CD4-positive, alpha-beta T cell (primary cell): ENCODE measurements at regions of chr6 and their contacts with region 1.

Region 1: DNA sequence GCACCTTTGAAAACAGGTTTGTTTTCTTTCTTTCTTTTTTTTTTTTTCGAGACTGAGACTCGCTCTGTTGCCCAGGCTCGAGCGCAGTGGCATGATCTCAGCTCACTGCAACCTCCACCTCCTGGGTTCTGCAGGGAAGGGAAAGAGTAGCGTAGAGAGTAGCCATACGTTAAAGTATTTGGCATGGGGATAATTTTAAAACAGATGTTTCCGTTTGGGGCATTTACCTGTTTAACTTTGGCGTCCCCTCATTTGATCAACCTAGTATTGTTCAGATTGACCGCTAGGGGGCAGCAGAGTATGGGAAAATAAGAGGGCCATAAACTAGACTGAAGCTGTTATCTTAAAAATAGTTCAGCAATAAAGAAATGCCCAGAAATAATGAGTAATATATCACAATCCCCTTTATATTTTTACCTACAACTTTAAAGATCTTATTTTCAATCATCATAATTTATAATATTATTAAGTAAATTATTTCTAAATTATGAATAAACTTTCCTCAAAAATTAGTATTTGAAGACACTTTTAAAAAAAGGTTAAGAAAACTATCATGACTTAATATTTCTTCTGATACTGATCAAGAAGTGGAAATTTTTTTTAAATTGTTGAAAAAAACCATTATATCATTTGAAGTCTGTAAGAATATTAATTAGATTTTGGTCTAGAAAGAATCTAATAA is 7.6 kb upstream of the TAAR9 start:
- DNase-seq: peak; percentile 13 to 83 (median 58)
- ATAC-seq: peak; percentile 73
- H3K4me3 ChIP-seq: no peak overlapping the region
- H3K4me3 Mint-ChIP-seq: no peak overlapping the region
- H3K27ac ChIP-seq: no peak overlapping the region
- H3K27ac Mint-ChIP-seq: no peak overlapping the region
- H3K4me1 ChIP-seq: no peaks in the 10 kb centered on the region
- H3K4me1 Mint-ChIP-seq: no peaks in the 10 kb centered on the region
- H3K27me3 ChIP-seq: peaks cover 0 to 2% of the 10 kb centered on the region in 2 experiments
- H3K27me3 Mint-ChIP-seq: peaks cover 21% of the 10 kb centered on the region
- CTCF ChIP-seq: peak; percentile 92

Region 2: GRCh38 chr6:132768051-132768517 is 237.7 kb after region 1 on chr6:
- CTCF ChIA-PET with region 1: interaction called, 5 read pairs
- POLR2A ChIA-PET with region 1: no interaction called
- intact Hi-C with region 1: loop called (anchors 5 to 10 kb)
- DNase-seq: peak in 3 of 14 experiments; percentile 16 to 47 (median 45)
- ATAC-seq: peak; percentile 38
- H3K4me3 ChIP-seq: no peak overlapping the region
- H3K4me3 Mint-ChIP-seq: no peak overlapping the region
- H3K27ac ChIP-seq: no peak overlapping the region
- H3K27ac Mint-ChIP-seq: no peak overlapping the region
- H3K4me1 ChIP-seq: peaks cover 8% of the 10 kb centered on the region
- H3K4me1 Mint-ChIP-seq: peaks cover 15% of the 10 kb centered on the region
- H3K27me3 ChIP-seq: no peaks in the 10 kb centered on the region
- H3K27me3 Mint-ChIP-seq: no peaks in the 10 kb centered on the region
- CTCF ChIP-seq: peak; percentile 27

Region 3: DNA sequence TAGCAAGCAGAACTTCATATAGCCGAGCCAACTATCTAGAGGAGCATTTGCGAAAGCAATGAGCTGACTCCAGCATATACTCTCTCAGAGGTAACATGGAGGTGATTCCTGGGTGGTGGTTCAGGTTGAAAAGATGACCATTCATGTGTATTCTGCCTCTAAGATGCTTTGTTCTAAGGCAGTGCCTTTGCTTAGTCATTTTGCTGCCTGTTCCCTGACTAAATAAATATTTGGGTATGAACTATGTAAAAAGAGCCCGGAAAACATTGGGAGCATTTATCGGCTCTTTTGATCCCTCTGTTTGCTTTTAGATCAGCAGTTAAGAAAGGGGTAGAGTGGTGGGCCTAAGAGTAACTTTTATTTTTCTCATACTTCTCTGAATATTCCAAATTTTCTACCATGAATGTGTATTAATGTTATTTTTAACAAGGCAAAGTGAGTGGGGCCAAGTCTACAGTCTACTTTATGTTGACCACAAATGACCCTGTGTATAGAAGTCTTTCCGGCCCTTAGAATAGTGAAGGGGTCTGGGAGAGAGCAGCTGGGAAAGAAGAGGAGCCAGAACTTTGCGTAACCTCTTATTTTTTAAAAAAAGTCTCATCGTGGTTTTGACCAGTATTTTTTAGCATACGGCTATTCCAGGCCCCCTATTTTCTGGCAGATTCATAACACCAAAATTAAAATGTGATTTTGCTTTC is 504.2 kb after region 1 on chr6:
- CTCF ChIA-PET with region 1: no interaction called
- POLR2A ChIA-PET with region 1: no interaction called
- intact Hi-C with region 1: loop called in 1 of 2 experiments (anchors 5 kb)
- DNase-seq: no peak
- ATAC-seq: no peak
- H3K4me3 ChIP-seq: no peak overlapping the region
- H3K4me3 Mint-ChIP-seq: no peak overlapping the region
- H3K27ac ChIP-seq: no peak overlapping the region
- H3K27ac Mint-ChIP-seq: no peak overlapping the region
- H3K4me1 ChIP-seq: no peaks in the 10 kb centered on the region
- H3K4me1 Mint-ChIP-seq: no peaks in the 10 kb centered on the region
- H3K27me3 ChIP-seq: no peaks in the 10 kb centered on the region
- H3K27me3 Mint-ChIP-seq: peaks cover 10% of the 10 kb centered on the region
- CTCF ChIP-seq: no peak

Region 4: DNA sequence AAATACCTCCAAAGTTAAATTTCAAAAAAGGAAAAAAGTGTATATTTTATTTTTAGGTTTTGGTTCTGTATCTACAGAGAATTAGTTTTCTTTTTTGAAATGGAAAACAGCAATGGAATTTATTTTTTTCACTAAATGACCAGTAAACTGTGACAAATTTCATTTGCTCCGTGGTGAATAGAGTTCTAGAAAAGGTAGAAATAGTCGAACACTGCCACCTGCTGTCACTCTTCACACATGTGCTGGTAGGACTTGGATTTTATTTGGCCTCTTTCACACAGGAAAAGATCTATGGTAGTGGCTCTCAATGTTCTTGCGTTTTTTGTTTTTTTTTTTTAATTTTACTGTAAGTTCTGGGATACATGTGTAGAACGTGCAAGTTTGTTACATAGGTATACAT is 1023.2 kb after region 1 on chr6:
- CTCF ChIA-PET with region 1: no interaction called
- POLR2A ChIA-PET with region 1: interaction called, 3 read pairs
- intact Hi-C with region 1: loop called (anchors 1 to 5 kb)
- DNase-seq: peak in 5 of 14 experiments; percentile 3 to 50 (median 39)
- ATAC-seq: no peak
- H3K4me3 ChIP-seq: no peak overlapping the region
- H3K4me3 Mint-ChIP-seq: no peak overlapping the region
- H3K27ac ChIP-seq: no peak overlapping the region
- H3K27ac Mint-ChIP-seq: no peak overlapping the region
- H3K4me1 ChIP-seq: no peaks in the 10 kb centered on the region
- H3K4me1 Mint-ChIP-seq: no peaks in the 10 kb centered on the region
- H3K27me3 ChIP-seq: peaks cover 0 to 3% of the 10 kb centered on the region in 2 experiments
- H3K27me3 Mint-ChIP-seq: peaks cover 8% of the 10 kb centered on the region
- CTCF ChIP-seq: peak; percentile 44

Region 5: DNA sequence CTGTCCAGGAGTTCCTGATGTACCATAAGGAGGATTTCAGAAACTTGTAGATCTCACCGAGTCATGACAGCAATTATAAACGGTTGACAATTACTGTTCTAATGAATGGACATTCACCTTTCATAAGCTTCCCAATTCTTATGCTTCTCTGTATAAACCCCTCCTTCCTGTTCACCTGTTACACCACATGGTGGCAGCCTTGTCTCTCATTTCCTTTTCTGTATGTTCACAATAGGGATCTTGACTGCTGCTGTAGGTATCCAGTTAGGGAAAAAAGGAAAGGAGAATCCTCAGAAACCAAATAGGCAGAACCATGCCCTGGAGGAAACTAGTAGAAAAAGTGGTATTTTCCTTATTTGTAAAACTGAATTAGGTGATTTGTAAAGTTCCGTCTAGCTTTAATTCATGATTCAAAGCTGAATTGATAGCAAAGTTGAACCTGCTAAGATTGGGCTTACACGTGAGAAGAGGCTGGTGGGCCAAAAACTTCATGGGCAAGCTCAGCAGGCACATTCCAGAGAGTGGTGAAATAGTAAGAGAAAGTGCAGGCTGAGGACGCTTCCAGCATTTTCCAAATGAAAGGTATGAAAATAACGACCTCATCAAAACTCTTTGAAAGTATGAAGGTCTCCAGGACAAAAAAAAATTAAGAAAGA is 1393.6 kb after region 1 on chr6:
- CTCF ChIA-PET with region 1: no interaction called
- POLR2A ChIA-PET with region 1: no interaction called
- intact Hi-C with region 1: loop called (anchors 5 kb)
- DNase-seq: peak in 13 of 14 experiments; percentile 24 to 81 (median 38)
- ATAC-seq: peak; percentile 86
- H3K4me3 ChIP-seq: no peak overlapping the region
- H3K4me3 Mint-ChIP-seq: no peak overlapping the region
- H3K27ac ChIP-seq: no peak overlapping the region
- H3K27ac Mint-ChIP-seq: no peak overlapping the region
- H3K4me1 ChIP-seq: no peaks in the 10 kb centered on the region
- H3K4me1 Mint-ChIP-seq: no peaks in the 10 kb centered on the region
- H3K27me3 ChIP-seq: peaks cover 0 to 7% of the 10 kb centered on the region in 2 experiments
- H3K27me3 Mint-ChIP-seq: peaks cover 38% of the 10 kb centered on the region
- CTCF ChIP-seq: peak; percentile 87

Region 6: DNA sequence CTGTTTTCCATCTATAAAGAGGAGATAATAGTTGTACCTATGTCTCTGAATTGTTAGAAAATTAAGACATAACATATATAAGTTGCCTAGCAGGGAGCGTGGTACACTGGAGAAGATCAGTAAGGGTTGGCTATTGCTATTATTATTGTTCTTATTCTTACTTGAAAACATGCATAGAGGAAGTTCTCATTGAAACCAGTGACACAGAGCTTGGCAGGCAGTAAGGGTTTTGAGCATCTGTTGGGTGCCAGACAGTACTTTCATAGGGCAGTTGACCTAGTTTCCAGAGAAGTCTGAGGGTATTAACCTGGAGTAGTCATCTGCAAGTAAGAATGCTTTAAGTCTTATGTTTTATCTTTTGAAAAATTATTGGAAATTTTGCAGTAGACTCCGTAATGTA is 1800.8 kb after region 1 on chr6:
- CTCF ChIA-PET with region 1: no interaction called
- POLR2A ChIA-PET with region 1: no interaction called
- intact Hi-C with region 1: no loop called
- DNase-seq: no peak
- ATAC-seq: no peak
- H3K4me3 ChIP-seq: no peak overlapping the region
- H3K4me3 Mint-ChIP-seq: no peak overlapping the region
- H3K27ac ChIP-seq: no peak overlapping the region
- H3K27ac Mint-ChIP-seq: no peak overlapping the region
- H3K4me1 ChIP-seq: no peaks in the 10 kb centered on the region
- H3K4me1 Mint-ChIP-seq: peaks cover 6% of the 10 kb centered on the region
- H3K27me3 ChIP-seq: no peaks in the 10 kb centered on the region
- H3K27me3 Mint-ChIP-seq: no peaks in the 10 kb centered on the region
- CTCF ChIP-seq: no peak